Activated T-helper 2 cell treated with anti-CD3 and anti-CD28 coated beads, Interferon-gamma antibody, Interleukin-2, Interleukin-4, amounts not matched to agents 10 μg/mL and 5 μg/mL and 100 μg/mL, durations not matched to agents 14 hours and 24 hours and 36 hours (primary cell): ENCODE measurements at regions of chr2 and their contacts with region 1.

Region 1: DNA sequence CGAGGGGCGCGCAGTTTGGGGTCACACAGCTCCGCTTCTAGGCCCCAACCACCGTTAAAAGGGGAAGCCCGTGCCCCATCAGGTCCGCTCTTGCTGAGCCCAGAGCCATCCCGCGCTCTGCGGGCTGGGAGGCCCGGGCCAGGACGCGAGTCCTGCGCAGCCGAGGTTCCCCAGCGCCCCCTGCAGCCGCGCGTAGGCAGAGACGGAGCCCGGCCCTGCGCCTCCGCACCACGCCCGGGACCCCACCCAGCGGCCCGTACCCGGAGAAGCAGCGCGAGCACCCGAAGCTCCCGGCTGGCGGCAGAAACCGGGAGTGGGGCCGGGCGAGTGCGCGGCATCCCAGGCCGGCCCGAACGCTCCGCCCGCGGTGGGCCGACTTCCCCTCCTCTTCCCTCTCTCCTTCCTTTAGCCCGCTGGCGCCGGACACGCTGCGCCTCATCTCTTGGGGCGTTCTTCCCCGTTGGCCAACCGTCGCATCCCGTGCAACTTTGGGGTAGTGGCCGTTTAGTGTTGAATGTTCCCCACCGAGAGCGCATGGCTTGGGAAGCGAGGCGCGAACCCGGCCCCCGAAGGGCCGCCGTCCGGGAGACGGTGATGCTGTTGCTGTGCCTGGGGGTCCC is at the start of gene ITGA4:
- DNase-seq: peak; percentile 87
- H3K4me3 Mint-ChIP-seq: peak within 1 kb of the TSS; percentile 98
- H3K27ac Mint-ChIP-seq: peak within 1 kb of the TSS; percentile 96
- H3K4me1 Mint-ChIP-seq: peaks cover 58% of the 10 kb centered on the region
- H3K27me3 Mint-ChIP-seq: no peaks in the 10 kb centered on the region
- total RNA-seq, gene ITGA4: 96.5 and 106 TPM in 2 replicates

Region 2: DNA sequence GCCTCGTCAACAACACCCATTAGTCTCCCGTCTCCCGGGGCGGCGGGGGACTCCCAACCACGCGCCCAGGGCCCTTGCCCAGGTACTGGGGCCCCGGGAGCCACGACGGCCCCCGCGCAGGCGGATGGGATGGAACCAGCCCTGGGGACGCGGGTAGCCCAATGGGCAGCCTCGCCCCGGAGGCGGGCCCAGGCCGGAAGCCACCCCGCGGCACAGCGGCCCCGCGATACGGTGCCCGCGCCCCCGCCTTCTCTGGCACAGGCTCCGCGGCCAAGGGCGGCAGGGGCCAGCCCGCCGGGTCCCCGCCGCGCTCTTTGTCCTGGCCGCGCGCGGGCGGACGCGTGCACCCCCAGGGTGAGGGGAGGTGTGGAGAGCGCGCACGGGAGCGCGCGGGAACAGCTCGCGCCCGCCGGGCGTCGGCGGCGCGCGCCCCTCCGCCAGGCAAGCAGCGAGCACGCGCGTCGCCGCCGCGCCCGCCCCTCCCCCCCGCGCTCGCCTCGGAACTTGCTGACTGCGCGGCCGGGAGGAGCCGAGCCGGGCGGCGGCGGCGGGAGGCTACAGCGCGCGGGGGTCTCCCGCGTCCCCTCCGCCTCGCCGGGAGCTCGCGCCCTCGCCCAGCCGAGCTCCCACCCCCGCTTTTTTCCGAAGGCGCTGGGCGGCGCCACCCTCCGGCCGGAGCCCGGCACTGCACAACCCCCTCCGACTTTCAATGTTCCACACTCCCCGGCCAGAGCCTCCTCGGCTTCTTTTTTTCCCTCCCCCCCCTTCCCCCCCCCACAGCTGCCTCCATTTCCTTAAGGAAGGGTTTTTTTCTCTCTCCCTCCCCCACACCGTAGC is 476.9 kb before region 1 on chr2 and contains the start of gene UBE2E3:
- intact Hi-C with region 1: loop called (anchors 5 kb)
- DNase-seq: peak; percentile 77
- H3K4me3 Mint-ChIP-seq: peak within 1 kb of the TSS; percentile 99
- H3K27ac Mint-ChIP-seq: peak within 1 kb of the TSS; percentile 95
- H3K4me1 Mint-ChIP-seq: peaks cover 36% of the 10 kb centered on the region
- H3K27me3 Mint-ChIP-seq: peaks cover 38% of the 10 kb centered on the region
- total RNA-seq, gene UBE2E3: 49.5 and 53.2 TPM in 2 replicates

Region 3: DNA sequence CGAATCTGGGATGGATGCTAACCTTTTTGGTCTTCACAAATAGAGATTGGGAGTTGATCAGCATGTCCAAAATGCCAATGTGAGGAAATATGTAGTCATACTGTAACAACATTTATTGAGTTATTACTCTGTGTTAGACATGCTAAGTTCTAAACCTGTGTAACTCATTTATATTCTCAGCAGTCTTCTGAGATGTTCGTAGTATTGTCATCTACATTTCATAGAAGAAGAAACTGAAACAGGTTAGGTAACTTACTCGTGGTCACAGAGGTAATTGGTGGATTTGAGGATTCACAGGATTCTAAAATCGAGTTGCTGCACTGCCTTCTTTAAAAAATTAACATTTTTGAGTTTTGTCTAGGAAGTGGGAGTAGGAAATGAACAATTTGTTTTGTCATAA is 314.7 kb before region 1 on chr2:
- intact Hi-C with region 1: loop called (anchors 1 kb)
- DNase-seq: no peak
- H3K4me3 Mint-ChIP-seq: peak overlapping the region; percentile 81
- H3K27ac Mint-ChIP-seq: peak overlapping the region; percentile 94
- H3K4me1 Mint-ChIP-seq: peaks cover 74% of the 10 kb centered on the region
- H3K27me3 Mint-ChIP-seq: no peaks in the 10 kb centered on the region

Region 4: DNA sequence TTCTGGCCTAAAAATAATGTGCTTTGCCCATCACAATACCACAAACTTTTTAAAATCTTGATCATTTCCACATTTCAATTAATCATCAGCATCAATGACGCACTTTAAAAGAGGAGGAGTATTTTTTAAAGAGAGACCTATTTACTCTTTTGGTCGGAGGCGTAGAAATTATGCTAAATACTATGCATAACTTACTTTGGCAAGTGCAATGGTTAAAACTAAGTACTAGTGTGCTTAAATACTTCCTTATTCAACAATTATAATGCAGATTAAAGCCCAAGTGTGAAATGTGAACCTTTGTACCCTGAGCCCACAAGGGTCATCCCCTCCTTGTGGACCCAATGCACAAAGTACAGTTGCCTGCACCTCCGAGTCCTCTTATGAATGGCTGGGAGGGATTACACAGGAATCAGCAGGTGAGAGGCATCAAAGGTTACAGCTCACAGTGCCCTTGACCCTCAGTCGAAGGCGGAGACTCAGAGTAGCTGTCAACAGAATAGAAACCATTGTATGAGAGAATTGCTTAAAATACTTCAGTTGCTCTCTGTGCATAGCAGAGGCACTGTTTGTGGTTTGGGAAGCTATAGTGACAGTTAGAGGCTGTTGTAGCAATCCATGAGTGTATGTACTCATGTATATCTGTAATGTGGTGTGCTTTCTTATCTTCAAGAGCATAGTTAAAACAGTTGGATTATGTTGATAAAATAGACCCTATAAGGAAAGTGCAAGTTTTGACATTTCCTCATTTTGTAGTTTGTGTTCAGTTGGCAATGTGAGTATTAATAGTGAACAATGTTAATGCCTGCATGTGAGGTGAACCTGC is 151.7 kb before region 1 on chr2:
- intact Hi-C with region 1: loop called (anchors 1 kb)
- DNase-seq: peak; percentile 70
- H3K4me3 Mint-ChIP-seq: peak overlapping the region; percentile 70
- H3K27ac Mint-ChIP-seq: peak overlapping the region; percentile 93
- H3K4me1 Mint-ChIP-seq: peaks cover 74% of the 10 kb centered on the region
- H3K27me3 Mint-ChIP-seq: no peaks in the 10 kb centered on the region

Region 5: DNA sequence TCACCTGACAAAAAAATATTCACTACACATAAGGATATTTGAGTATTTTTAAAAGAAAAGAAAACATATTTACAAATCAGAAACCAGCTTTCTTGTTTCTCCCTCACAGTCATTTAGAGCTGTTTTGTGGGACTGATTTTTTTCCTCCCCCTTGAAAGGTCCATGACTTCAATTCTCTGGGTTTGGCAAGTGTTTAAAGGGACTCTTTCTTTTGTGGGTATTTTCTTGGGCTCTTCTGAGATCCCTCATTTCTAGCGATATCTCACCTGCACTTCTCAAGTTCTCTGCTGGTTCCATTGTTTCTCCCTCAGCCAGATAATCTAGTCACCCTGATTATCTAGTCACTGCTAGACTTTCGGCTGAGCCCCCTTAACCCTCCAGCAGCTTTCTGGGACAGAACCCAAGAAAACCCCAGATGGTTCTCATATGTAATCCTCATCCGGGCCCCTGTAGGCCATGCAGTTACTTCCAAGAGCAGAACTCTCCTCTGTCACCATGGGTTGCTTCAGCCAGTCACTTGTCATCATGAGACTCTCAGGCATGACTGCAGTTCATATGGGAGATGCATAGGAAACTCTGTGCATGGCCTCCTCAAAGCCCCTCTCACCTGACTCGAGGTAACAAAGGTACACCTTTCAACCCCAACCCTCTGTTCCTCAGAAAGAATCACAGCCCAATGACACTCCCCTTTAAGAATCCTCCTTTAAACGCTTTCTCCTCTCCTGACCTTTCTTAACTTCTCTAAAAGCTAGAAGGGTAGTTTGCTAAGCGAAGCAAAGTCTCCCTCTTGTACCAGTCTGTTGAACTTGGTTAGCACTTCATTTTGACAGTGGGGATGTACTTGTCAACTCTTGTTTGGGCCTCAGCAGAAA is 36.7 kb before region 1 on chr2:
- intact Hi-C with region 1: loop called (anchors 5 kb)
- DNase-seq: no peak
- H3K4me3 Mint-ChIP-seq: peak overlapping the region; percentile 7
- H3K27ac Mint-ChIP-seq: peak overlapping the region; percentile 75
- H3K4me1 Mint-ChIP-seq: peaks cover 28% of the 10 kb centered on the region
- H3K27me3 Mint-ChIP-seq: no peaks in the 10 kb centered on the region

Region 6: DNA sequence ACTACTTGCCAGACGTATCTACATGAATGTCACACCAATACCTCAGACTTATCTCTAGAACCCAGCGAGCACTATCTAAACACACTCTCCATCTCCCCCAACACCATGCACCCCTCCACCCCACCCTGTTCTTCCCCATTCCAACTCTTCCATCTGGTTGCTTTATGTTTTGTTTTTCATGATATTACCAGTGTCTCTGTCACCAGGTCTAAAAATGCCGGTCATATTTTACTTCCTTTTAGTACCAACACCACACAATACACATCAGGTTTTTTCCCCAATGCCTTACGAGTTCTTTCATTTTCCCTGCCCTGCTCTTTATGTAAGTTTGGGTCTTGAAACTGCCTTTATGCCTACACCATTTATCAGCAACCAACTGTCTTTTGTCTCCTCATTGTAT is 10.2 kb before region 1 on chr2:
- intact Hi-C with region 1: loop called (anchors 1 kb)
- DNase-seq: no peak
- H3K4me3 Mint-ChIP-seq: no peak overlapping the region
- H3K27ac Mint-ChIP-seq: peak overlapping the region; percentile 25
- H3K4me1 Mint-ChIP-seq: peaks cover 35% of the 10 kb centered on the region
- H3K27me3 Mint-ChIP-seq: no peaks in the 10 kb centered on the region

Region 7: GRCh38 chr2:181780047-181780651 is 322.9 kb after region 1 on chr2:
- intact Hi-C with region 1: no loop called
- DNase-seq: no peak
- H3K4me3 Mint-ChIP-seq: no peak overlapping the region
- H3K27ac Mint-ChIP-seq: no peak overlapping the region
- H3K4me1 Mint-ChIP-seq: peaks cover 15% of the 10 kb centered on the region
- H3K27me3 Mint-ChIP-seq: peaks cover 6% of the 10 kb centered on the region